Activated CD4-positive, alpha-beta T cell treated with anti-CD3 and anti-CD28 coated beads, Interleukin-2, amount 10 ng/mL, durations not matched to agents 7 days and 5 days (primary cell): ENCODE measurements at regions of chr14 and their contacts with region 1.

Region 1: DNA sequence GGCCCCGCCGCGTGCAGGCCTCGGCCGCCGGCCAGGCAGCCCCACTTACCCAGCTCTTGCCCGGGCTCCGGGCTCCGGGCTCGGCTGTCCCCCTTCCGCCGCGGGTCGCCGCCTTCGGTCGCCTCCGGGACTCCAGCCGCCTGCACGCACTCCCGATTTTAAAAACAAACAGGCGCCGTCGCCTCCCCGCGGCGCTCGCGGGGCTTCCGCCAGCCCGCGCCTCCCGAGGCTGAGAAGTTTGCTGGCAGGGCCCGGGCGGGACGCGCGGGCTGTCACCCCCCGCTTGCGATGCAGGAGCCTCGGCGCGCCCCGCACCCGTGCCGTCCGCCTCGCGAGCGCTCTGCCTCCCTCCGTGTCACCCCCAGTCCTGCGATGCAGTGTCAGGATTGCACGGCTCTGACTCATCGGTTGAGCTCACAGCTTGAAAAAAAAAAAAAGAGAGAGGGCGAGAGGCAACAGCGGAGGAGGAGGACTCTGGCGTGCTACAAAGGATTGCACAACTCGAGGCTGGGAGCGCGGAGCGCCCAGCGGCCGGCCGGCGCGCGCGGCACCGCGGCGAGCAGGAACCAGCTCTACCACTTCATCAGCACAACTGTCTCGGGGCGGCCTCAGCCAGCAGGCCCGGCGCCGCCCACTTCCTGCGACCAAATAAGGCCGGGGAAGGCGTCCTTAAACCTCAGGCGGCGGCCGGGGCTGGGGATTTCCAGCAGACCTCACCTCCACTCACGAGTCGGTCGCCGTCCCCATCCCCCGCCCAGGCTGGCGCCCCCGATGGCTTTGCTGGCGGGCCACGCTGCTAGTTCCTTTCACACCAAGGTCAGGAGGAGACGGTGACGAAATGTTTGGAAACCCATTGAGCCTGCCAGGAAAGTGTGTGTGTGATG is 45.8 kb upstream of the PNMA1 start:
- DNase-seq: peak; percentile 97
- H3K4me3 Mint-ChIP-seq: peak overlapping the region; percentile 89
- H3K27ac Mint-ChIP-seq: peak overlapping the region; percentile 93
- H3K4me1 Mint-ChIP-seq: peaks cover 78% of the 10 kb centered on the region
- H3K27me3 Mint-ChIP-seq: no peaks in the 10 kb centered on the region

Region 2: DNA sequence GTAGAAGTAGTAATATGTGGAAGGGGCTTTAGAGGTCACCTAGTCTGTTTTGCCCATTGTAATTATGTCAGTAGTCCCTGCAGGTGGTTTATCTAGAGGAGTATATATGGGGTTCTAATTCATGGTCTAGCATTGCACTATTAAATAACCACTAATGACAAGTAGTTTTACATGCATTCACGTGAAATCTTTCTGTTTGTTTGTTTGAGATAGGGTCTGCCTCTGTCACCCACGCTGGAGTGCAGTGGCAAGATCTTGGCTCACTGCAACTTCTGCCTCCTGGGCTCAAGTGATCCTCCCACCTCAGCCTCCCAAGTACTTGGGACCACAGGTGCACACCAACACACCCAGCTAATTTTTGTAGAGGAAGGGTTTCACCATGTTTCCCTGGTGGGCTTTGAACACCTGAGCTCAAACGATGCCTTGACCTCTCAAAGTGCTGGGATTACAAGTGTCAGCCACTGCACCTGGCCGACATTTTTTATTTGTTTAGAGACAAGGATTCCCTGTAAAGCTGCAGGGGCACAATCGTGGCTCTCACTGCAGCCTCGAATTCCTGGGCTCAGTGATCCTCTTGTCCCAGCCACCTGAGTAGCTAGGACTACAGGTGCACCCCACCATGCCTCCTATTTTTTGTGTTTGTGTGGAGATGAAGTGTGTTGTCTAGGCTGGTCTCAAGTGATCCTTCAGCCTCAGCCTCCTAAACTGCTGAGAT is 635.6 kb before region 1 on chr14:
- CTCF ChIA-PET with region 1: no interaction called
- POLR2A ChIA-PET with region 1: no interaction called
- DNase-seq: no peak
- H3K4me3 Mint-ChIP-seq: no peak overlapping the region
- H3K27ac Mint-ChIP-seq: no peak overlapping the region
- H3K4me1 Mint-ChIP-seq: peaks cover 3% of the 10 kb centered on the region
- H3K27me3 Mint-ChIP-seq: no peaks in the 10 kb centered on the region

Region 3: DNA sequence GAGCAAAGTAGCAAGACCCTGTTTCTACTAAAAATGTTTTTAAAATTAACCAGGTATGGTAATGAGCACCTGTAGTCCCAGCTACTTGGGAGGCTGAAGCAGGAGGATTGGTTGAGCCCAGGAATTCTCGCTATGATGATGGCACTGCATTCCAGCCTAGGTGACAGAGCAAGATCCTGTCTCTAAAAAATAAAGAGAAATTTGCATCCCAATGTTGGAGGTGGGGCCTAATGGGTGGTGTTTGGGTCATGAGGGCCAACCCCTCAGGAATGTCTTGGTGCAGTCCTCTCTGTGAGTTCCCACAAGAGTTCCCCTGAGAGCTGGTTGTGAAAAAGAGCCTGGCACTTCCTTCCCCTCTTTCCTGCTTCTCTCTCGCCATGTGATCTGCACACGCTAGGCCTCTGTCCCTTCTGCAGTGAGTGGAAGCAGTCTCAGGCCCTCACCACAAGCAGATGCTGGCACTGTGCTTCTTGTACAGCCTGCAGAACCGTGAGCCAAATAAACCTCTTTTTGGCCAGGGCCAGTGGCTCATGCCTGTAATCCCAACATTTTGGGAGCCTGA is 136.4 kb before region 1 on chr14:
- CTCF ChIA-PET with region 1: no interaction called
- POLR2A ChIA-PET with region 1: no interaction called
- DNase-seq: no peak
- H3K4me3 Mint-ChIP-seq: no peak overlapping the region
- H3K27ac Mint-ChIP-seq: no peak overlapping the region
- H3K4me1 Mint-ChIP-seq: no peaks in the 10 kb centered on the region
- H3K27me3 Mint-ChIP-seq: no peaks in the 10 kb centered on the region

Region 4: GRCh38 chr14:73741386-73741875 is 18.5 kb before region 1 on chr14:
- CTCF ChIA-PET with region 1: interaction called, 102 read pairs
- POLR2A ChIA-PET with region 1: interaction called, 5 read pairs
- DNase-seq: peak; percentile 81
- H3K4me3 Mint-ChIP-seq: peak overlapping the region; percentile 82
- H3K27ac Mint-ChIP-seq: peak overlapping the region; percentile 90
- H3K4me1 Mint-ChIP-seq: peaks cover 76% of the 10 kb centered on the region
- H3K27me3 Mint-ChIP-seq: no peaks in the 10 kb centered on the region

Region 5: DNA sequence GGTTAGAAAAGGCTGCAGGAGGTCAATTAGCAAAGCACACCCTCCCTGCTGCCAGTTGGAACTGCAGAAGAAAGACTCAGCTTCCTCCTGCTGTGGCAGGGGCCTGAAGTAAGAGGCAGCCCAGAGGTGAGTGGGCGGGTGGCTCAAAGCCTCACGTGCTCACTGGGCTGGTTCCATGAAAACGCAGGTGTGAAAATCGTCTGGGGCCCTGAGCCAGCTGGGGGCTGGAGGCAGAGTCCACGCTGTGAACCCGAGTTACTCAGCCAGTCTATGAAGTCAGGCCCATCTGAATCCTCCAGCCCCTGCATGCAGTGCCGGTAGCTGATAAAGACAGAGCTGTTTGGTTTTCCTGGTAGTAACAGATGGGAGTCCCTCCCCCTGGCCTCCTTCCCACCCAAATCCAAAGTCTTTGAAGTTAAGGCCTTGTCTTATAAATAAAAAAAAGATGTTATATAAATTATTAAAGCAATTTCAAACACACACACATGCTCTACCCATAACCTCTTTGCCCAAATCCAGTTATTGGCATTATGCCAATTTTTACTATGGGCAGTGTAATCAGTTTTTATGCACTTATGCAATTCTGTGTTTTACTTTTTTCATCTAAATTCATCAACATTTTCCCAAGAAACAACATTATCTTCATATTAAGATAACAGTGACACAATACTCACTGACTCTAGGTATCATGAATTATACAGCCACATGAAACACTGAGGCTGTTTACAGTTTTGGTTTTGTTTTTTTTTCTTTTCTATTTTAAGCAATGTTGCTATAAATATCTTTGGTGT is 12.1 kb after region 1 on chr14:
- CTCF ChIA-PET with region 1: interaction called, 8 read pairs
- POLR2A ChIA-PET with region 1: interaction called, 14 read pairs
- DNase-seq: peak; percentile 68
- H3K4me3 Mint-ChIP-seq: peak overlapping the region; percentile 42
- H3K27ac Mint-ChIP-seq: peak overlapping the region; percentile 88
- H3K4me1 Mint-ChIP-seq: peaks cover 72% of the 10 kb centered on the region
- H3K27me3 Mint-ChIP-seq: no peaks in the 10 kb centered on the region

Region 6: GRCh38 chr14:73785873-73786695 is 26.1 kb after region 1 on chr14:
- CTCF ChIA-PET with region 1: interaction called, 17 read pairs
- POLR2A ChIA-PET with region 1: interaction called, 11 read pairs
- DNase-seq: peak; percentile 76
- H3K4me3 Mint-ChIP-seq: peak overlapping the region; percentile 87
- H3K27ac Mint-ChIP-seq: peak overlapping the region; percentile 95
- H3K4me1 Mint-ChIP-seq: peaks cover 61% of the 10 kb centered on the region
- H3K27me3 Mint-ChIP-seq: no peaks in the 10 kb centered on the region

Region 7: GRCh38 chr14:73887694-73888668 is 128.0 kb after region 1 on chr14:
- CTCF ChIA-PET with region 1: no interaction called
- POLR2A ChIA-PET with region 1: no interaction called
- DNase-seq: no peak
- H3K4me3 Mint-ChIP-seq: peak overlapping the region; percentile 98
- H3K27ac Mint-ChIP-seq: peak overlapping the region; percentile 97
- H3K4me1 Mint-ChIP-seq: peaks cover 46% of the 10 kb centered on the region
- H3K27me3 Mint-ChIP-seq: no peaks in the 10 kb centered on the region